ENCODE measurements at regions of chr9 and their contacts with region 1.

Region 1: GRCh38 chr9:91500509-91501011 is 76.9 kb upstream of the NFIL3 start:
- DNase-seq: no peak
- H3K4me3 ChIP-seq: no peak overlapping the region
- H3K27ac ChIP-seq: no peak overlapping the region
- H3K4me1 ChIP-seq: no peaks in the 10 kb centered on the region
- H3K27me3 ChIP-seq: no peaks in the 10 kb centered on the region
- CTCF ChIP-seq: no peak
- EP300 ChIP-seq: no peak
- POLR2A ChIP-seq: no peak

Region 2: DNA sequence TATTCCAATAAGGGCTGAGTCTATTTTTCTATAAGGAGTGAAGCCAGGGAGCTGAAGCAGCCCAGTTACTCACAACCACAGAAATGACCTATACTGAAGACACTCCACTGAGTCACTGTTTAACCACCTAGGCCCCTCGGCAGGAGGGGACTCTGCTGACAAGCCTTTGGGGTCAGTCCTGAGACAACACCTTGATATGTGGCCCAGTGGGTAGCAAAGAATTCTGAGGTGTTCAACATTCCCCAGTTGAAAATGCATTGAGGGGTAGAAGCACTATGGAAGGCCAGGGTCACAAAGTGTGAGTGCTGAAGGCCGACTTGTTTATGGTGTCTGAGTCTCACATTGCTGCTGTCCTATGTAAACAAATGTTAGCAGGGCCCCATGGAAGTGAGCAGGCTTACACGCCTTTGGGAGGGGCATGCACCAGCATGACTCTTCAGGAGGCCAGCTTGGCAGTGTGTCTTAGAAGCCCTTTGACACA is 35.7 kb after region 1 on chr9:
- in situ Hi-C with region 1: no loop called
- intact Hi-C with region 1: loop called (anchors 1 kb)
- DNase-seq: peak; percentile 72
- H3K4me3 ChIP-seq: no peak overlapping the region
- H3K27ac ChIP-seq: no peak overlapping the region
- H3K4me1 ChIP-seq: peaks cover 0 to 12% (median 0%) of the 10 kb centered on the region in 4 donors
- H3K27me3 ChIP-seq: no peaks in the 10 kb centered on the region
- CTCF ChIP-seq: no peak
- EP300 ChIP-seq: no peak
- POLR2A ChIP-seq: no peak

Region 3: GRCh38 chr9:91560285-91560684 is 59.7 kb after region 1 on chr9:
- in situ Hi-C with region 1: loop called in 1 of 4 experiments (anchors 10 kb)
- intact Hi-C with region 1: no loop called
- DNase-seq: no peak
- H3K4me3 ChIP-seq: no peak overlapping the region
- H3K27ac ChIP-seq: no peak overlapping the region
- H3K4me1 ChIP-seq: peaks cover 0 to 4% (median 0%) of the 10 kb centered on the region in 4 donors
- H3K27me3 ChIP-seq: no peaks in the 10 kb centered on the region
- CTCF ChIP-seq: no peak
- EP300 ChIP-seq: no peak
- POLR2A ChIP-seq: no peak

Region 4: GRCh38 chr9:91604451-91605179 is 104.1 kb after region 1 on chr9:
- in situ Hi-C with region 1: no loop called
- intact Hi-C with region 1: no loop called
- DNase-seq: no peak
- H3K4me3 ChIP-seq: no peak overlapping the region
- H3K27ac ChIP-seq: no peak overlapping the region
- H3K4me1 ChIP-seq: peaks cover 0 to 21% (median 9%) of the 10 kb centered on the region in 4 donors
- H3K27me3 ChIP-seq: no peaks in the 10 kb centered on the region
- CTCF ChIP-seq: no peak
- EP300 ChIP-seq: no peak
- POLR2A ChIP-seq: no peak

Measured in transverse colon (tissue), 4 donors.